Pancreas (tissue), 10 donors: ENCODE measurements at regions of chr4 and their contacts with region 1.

Region 1: GRCh38 chr4:83262682-83263081 is 21.9 kb downstream of the COQ2 start:
- DNase-seq: no peak
- ATAC-seq: no peak
- H3K4me3 ChIP-seq: no peak overlapping the region
- H3K27ac ChIP-seq: no peak overlapping the region
- H3K4me1 ChIP-seq: peaks cover 0 to 3% (median 0%) of the 10 kb centered on the region in 3 donors
- H3K27me3 ChIP-seq: no peaks in the 10 kb centered on the region
- CTCF ChIP-seq: no peak

Region 2: DNA sequence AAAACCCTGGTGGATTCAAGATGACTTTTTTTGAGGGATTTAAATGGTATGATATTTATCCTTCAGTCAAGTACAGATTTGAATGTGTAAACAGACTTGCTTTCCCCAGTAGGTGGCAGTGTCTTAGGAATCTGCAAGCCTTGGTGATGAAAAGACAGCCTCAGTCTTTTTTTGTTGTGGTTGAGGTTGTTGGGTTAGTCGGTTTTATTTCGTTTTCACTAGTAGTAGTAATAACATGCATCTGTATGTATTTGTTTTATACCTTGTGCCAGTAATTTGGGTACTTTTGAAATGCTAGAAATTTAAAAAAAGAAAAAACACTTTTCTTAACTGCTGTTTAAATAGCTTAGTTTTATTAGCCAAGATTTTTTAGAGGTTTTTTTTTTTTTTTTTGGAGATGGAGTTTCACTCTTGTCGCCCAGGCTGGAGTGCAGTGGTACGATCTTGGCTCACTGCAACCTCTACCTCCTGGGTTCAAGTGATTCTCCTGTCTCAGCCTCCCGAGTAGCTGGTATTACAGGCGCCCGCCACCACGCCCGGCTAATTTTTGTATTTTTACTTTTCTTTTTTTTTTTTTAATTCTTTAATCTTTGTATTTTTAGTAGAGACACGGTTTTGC is 188.5 kb before region 1 on chr4:
- intact Hi-C with region 1: loop called in 1 of 3 experiments (anchors 5 kb)
- DNase-seq: peak in 2 of 6 donors; percentile 6 to 30
- ATAC-seq: peak in 3 of 4 donors; percentile 78 to 85 (median 81)
- H3K4me3 ChIP-seq: no peak overlapping the region
- H3K27ac ChIP-seq: no peak overlapping the region
- H3K4me1 ChIP-seq: no peaks in the 10 kb centered on the region
- H3K27me3 ChIP-seq: no peaks in the 10 kb centered on the region
- CTCF ChIP-seq: peak; percentile 46 to 62 (median 54)